Adrenal gland (tissue), 19 donors: ENCODE measurements at regions of chr14 and their contacts with region 1.

Region 1: GRCh38 chr14:75132382-75133086 is 5.7 kb upstream of the NEK9 start:
- DNase-seq: peak in 5 of 7 donors; percentile 45 to 75 (median 72)
- H3K4me3 ChIP-seq: no peak overlapping the region
- H3K27ac ChIP-seq: peak overlapping the region in 2 of 5 donors; percentile 29 to 33
- H3K4me1 ChIP-seq: peaks cover 4 to 13% of the 10 kb centered on the region in 2 donors
- H3K27me3 ChIP-seq: no peaks in the 10 kb centered on the region
- CTCF ChIP-seq: peak; percentile 67 to 94 (median 88)
- POLR2A ChIP-seq: no peak

Region 2: DNA sequence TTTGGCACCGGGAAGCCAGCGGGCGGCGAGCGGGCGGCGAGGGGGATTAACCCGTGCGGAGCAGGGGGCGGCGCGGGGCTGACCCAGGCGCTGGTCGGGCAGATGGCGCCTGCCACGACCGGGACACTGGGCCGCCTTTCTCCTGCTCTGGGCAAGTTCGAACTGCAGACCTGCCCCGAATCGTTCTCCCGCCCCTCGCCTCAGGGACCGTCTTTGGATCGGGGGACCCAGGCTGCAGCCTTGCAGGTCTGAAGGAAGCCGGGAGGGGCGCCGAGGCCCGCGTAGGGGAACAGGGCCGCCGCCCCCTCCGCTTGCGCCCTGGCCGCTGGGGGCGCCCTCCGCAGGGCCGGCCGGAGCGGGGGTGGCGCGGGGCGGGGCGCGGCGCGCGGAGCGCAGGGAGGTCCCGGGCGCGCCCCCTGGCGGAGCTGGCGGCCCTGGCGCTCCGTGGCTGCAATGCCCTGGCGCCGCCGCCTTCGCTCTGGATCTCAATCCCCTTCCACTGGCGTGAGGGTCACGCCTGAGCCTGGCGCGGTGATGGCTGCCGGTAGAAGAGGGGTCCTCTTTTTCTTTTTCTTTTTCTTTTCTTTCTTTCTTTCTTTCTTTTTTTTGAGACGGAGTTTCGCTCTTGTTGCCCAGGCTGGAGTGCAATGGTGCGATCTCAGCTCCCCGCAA is 520.0 kb before region 1 on chr14:
- intact Hi-C with region 1: no loop called
- DNase-seq: peak; percentile 63 to 86 (median 73)
- H3K4me3 ChIP-seq: peak overlapping the region in 3 of 4 donors; percentile 43 to 71 (median 47)
- H3K27ac ChIP-seq: peak overlapping the region in 1 of 5 donors; percentile 46
- H3K4me1 ChIP-seq: peaks cover 0 to 11% of the 10 kb centered on the region in 2 donors
- H3K27me3 ChIP-seq: peaks cover 24% of the 10 kb centered on the region
- CTCF ChIP-seq: peak; percentile 19 to 91 (median 56)
- POLR2A ChIP-seq: no peak

Region 3: GRCh38 chr14:75293920-75294642 is 161.5 kb after region 1 on chr14:
- intact Hi-C with region 1: loop called in 1 of 2 experiments (anchors 2 kb)
- DNase-seq: peak; percentile 96 to 98 (median 97)
- H3K4me3 ChIP-seq: peak overlapping the region in 3 of 4 donors; percentile 8 to 84 (median 38)
- H3K27ac ChIP-seq: peak overlapping the region; percentile 82 to 99 (median 89)
- H3K4me1 ChIP-seq: peaks cover 8 to 26% of the 10 kb centered on the region in 2 donors
- H3K27me3 ChIP-seq: no peaks in the 10 kb centered on the region
- CTCF ChIP-seq: no peak
- POLR2A ChIP-seq: peak; percentile 13 to 68

Region 4: DNA sequence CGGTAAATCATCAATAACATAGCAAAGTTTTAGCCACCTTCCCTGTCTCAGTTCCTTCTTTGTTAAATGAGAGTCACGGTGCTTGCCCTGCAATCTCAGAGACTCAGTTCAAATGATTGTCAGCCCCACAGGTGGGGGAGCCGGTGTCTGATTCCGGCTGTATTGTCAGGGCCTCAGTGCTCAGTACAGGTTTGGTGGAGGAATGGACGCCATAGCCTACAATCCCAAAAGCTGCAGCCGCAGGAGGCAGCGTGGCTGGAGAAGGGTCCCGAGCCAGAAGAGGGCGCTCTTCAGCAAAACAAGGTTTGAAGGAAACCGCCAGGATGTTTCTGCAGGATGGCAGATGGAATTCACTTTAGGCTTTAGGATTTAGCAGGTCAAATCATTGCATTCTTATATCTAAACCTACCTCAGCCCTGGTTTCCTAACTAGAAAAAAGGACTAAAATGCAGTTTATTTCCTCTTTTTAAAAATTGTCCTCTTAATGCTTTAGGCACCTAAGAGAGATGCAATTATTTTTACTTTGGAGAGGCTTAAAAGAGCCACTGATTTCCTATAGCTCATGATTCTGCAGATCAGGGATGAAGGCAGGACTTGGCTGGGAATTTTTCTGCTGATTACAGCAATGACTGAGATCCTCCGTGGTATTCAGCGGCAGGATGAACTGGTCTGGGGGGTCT is 175.3 kb after region 1 on chr14:
- intact Hi-C with region 1: loop called (anchors 2 to 5 kb)
- DNase-seq: peak; percentile 79 to 95 (median 89)
- H3K4me3 ChIP-seq: no peak overlapping the region
- H3K27ac ChIP-seq: no peak overlapping the region
- H3K4me1 ChIP-seq: peaks cover 0 to 10% of the 10 kb centered on the region in 2 donors
- H3K27me3 ChIP-seq: no peaks in the 10 kb centered on the region
- CTCF ChIP-seq: peak; percentile 81 to 94 (median 91)
- POLR2A ChIP-seq: no peak

Region 5: DNA sequence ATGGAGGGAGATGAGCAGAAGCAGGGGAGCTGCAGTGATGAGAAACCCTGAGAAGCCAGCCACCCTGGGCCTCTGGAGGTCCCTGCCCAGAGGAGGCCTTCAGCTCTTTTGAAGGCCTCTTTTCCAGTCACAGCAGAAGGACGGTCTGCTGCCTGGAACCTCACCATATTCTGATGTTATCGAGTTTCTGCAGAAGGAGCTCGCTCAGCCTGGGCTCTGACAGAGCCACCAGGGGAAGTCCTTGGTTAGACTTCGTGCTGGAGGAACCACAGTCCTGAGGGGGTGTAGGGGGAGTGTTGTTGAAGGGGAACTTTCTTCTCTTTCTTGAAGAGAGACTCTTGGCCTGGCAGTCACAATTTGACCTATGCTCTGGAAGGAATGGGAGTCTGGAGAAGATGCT is 364.7 kb after region 1 on chr14:
- intact Hi-C with region 1: loop called in 1 of 2 experiments (anchors 10 kb)
- DNase-seq: peak in 1 of 7 donors; percentile 18
- H3K4me3 ChIP-seq: no peak overlapping the region
- H3K27ac ChIP-seq: no peak overlapping the region
- H3K4me1 ChIP-seq: peaks cover 0 to 6% of the 10 kb centered on the region in 2 donors
- H3K27me3 ChIP-seq: no peaks in the 10 kb centered on the region
- CTCF ChIP-seq: no peak
- POLR2A ChIP-seq: no peak